ENCODE measurements at regions of chr1 and their contacts with region 1.

Region 1: GRCh38 chr1:23867953-23868556 is at the start of gene FUCA1:
- DNase-seq: peak; percentile 96
- ATAC-seq: peak; percentile 98
- H3K4me3 Mint-ChIP-seq: peak within 1 kb of the TSS; percentile 76
- H3K27ac Mint-ChIP-seq: peak within 1 kb of the TSS; percentile 53
- H3K4me1 Mint-ChIP-seq: peaks cover 18% of the 10 kb centered on the region
- H3K27me3 Mint-ChIP-seq: no peaks in the 10 kb centered on the region
- CTCF ChIP-seq: peak; percentile 87
- total RNA-seq, gene FUCA1: 4.6 to 4.8 TPM

Region 2: GRCh38 chr1:23790696-23791515 is 77.1 kb before region 1 on chr1 and contains the start of gene LYPLA2:
- CTCF ChIA-PET with region 1: no interaction called
- POLR2A ChIA-PET with region 1: no interaction called
- intact Hi-C with region 1: no loop called
- DNase-seq: peak; percentile 94
- ATAC-seq: peak; percentile 89
- H3K4me3 Mint-ChIP-seq: peak within 1 kb of the TSS; percentile 99
- H3K27ac Mint-ChIP-seq: peak within 1 kb of the TSS; percentile 96
- H3K4me1 Mint-ChIP-seq: peaks cover 20% of the 10 kb centered on the region
- H3K27me3 Mint-ChIP-seq: no peaks in the 10 kb centered on the region
- CTCF ChIP-seq: no peak
- total RNA-seq, gene LYPLA2: 57.0 to 59.2 TPM

Region 3: GRCh38 chr1:23837908-23838307 is 30.1 kb before region 1 on chr1:
- CTCF ChIA-PET with region 1: no interaction called
- POLR2A ChIA-PET with region 1: no interaction called
- intact Hi-C with region 1: no loop called
- DNase-seq: peak; percentile 18
- ATAC-seq: no peak
- H3K4me3 Mint-ChIP-seq: peak overlapping the region; percentile 65
- H3K27ac Mint-ChIP-seq: no peak overlapping the region
- H3K4me1 Mint-ChIP-seq: peaks cover 12% of the 10 kb centered on the region
- H3K27me3 Mint-ChIP-seq: peaks cover 3% of the 10 kb centered on the region
- CTCF ChIP-seq: no peak

Region 4: GRCh38 chr1:23916209-23917131 is 48.4 kb after region 1 on chr1:
- CTCF ChIA-PET with region 1: interaction called, 11 read pairs
- POLR2A ChIA-PET with region 1: no interaction called
- intact Hi-C with region 1: no loop called
- DNase-seq: peak; percentile 83
- ATAC-seq: peak; percentile 94
- H3K4me3 Mint-ChIP-seq: no peak overlapping the region
- H3K27ac Mint-ChIP-seq: no peak overlapping the region
- H3K4me1 Mint-ChIP-seq: peaks cover 26% of the 10 kb centered on the region
- H3K27me3 Mint-ChIP-seq: no peaks in the 10 kb centered on the region
- CTCF ChIP-seq: peak; percentile 82

Measured in activated CD8-positive, alpha-beta T cell treated with anti-CD3 and anti-CD28 coated beads for 36 hours (primary cell).